PC-9 (cell line): ENCODE measurements at regions of chr1 and their contacts with region 1.

Region 1: GRCh38 chr1:44108241-44108640 is 10.4 kb upstream of the KLF17 start:
- DNase-seq: no peak
- H3K4me3 ChIP-seq: no peak overlapping the region
- H3K27ac ChIP-seq: no peak overlapping the region
- H3K4me1 ChIP-seq: no peaks in the 10 kb centered on the region
- H3K27me3 ChIP-seq: no peaks in the 10 kb centered on the region
- CTCF ChIP-seq: no peak

Region 2: GRCh38 chr1:44144962-44145756 is 36.9 kb after region 1 on chr1:
- CTCF ChIA-PET with region 1: no interaction called
- POLR2A ChIA-PET with region 1: interaction called, 45 read pairs
- intact Hi-C with region 1: no loop called
- DNase-seq: no peak
- H3K4me3 ChIP-seq: no peak overlapping the region
- H3K27ac ChIP-seq: no peak overlapping the region
- H3K4me1 ChIP-seq: no peaks in the 10 kb centered on the region
- H3K27me3 ChIP-seq: no peaks in the 10 kb centered on the region
- CTCF ChIP-seq: no peak

Region 3: DNA sequence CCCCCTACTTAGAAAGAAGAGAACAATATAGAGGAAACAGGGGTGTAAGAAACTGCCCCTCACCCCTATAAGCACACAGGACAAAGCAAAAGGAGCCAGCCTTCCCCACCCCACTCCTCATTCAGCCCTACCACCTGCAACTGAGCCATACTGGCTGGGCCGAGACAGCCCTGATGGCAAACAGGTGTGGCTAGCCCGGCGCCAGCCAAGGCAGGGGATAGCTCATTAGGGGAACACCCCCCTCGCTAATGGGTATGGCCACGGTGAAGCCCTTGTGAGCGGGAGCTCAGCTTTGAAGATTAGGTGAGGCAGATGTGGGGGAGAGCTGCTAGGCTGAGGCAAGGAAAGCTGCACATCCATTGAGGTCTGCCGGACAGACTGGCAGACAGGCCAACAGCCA is 181.3 kb after region 1 on chr1:
- CTCF ChIA-PET with region 1: no interaction called
- POLR2A ChIA-PET with region 1: no interaction called
- intact Hi-C with region 1: no loop called
- DNase-seq: no peak
- H3K4me3 ChIP-seq: no peak overlapping the region
- H3K27ac ChIP-seq: no peak overlapping the region
- H3K4me1 ChIP-seq: no peaks in the 10 kb centered on the region
- H3K27me3 ChIP-seq: no peaks in the 10 kb centered on the region
- CTCF ChIP-seq: no peak